ENCODE measurements at regions of chr19 and their contacts with region 1.

Region 1: GRCh38 chr19:35140962-35141637 is 2.0 kb upstream of the FXYD7 start:
- DNase-seq: peak; percentile 88
- H3K4me3 ChIP-seq: peak overlapping the region in 1 of 3 experiments; percentile 26
- H3K27ac ChIP-seq: no peak overlapping the region
- H3K4me1 ChIP-seq: peaks cover 33% of the 10 kb centered on the region
- H3K27me3 ChIP-seq: no peaks in the 10 kb centered on the region
- CTCF ChIP-seq: peak; percentile 19 to 79

Region 2: DNA sequence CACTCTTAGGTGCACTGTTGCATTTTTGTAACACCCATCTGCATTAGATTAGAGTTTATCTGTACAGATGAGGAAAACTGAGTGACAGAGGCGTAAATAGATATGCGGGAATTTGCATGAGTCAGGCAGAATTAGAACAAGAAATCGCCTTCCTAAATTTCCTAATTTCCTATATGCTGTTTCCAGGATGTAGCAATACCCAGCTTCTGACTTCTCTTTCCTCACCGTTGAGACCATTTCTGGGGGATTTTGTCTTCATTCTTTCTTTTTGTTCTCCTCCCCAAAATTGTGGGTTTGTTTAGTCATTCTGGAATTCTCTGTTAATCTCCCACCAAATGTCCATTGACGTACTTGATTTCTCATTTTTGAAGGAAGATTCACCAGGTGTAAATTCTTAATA is 166.5 kb before region 1 on chr19:
- CTCF ChIA-PET with region 1: no interaction called
- dilution Hi-C with region 1: loop called (anchors 5 kb)
- in situ Hi-C with region 1: no loop called
- intact Hi-C with region 1: loop called (anchors 1 kb)
- DNase-seq: no peak
- H3K4me3 ChIP-seq: no peak overlapping the region
- H3K27ac ChIP-seq: no peak overlapping the region
- H3K4me1 ChIP-seq: no peaks in the 10 kb centered on the region
- H3K27me3 ChIP-seq: no peaks in the 10 kb centered on the region
- CTCF ChIP-seq: no peak

Region 3: GRCh38 chr19:35114353-35115176 is 26.5 kb before region 1 on chr19:
- CTCF ChIA-PET with region 1: no interaction called
- dilution Hi-C with region 1: no loop called
- in situ Hi-C with region 1: no loop called
- intact Hi-C with region 1: loop called (anchors 1 kb)
- DNase-seq: peak; percentile 68
- H3K4me3 ChIP-seq: peak overlapping the region; percentile 75 to 94 (median 89)
- H3K27ac ChIP-seq: peak overlapping the region; percentile 91
- H3K4me1 ChIP-seq: peaks cover 50% of the 10 kb centered on the region
- H3K27me3 ChIP-seq: no peaks in the 10 kb centered on the region
- CTCF ChIP-seq: peak; percentile 99 to 100

Region 4: GRCh38 chr19:35213663-35214632 is 72.8 kb after region 1 on chr19:
- CTCF ChIA-PET with region 1: no interaction called
- dilution Hi-C with region 1: no loop called
- in situ Hi-C with region 1: no loop called
- intact Hi-C with region 1: loop called (anchors 2 kb)
- DNase-seq: peak; percentile 94
- H3K4me3 ChIP-seq: no peak overlapping the region
- H3K27ac ChIP-seq: no peak overlapping the region
- H3K4me1 ChIP-seq: peaks cover 11% of the 10 kb centered on the region
- H3K27me3 ChIP-seq: no peaks in the 10 kb centered on the region
- CTCF ChIP-seq: no peak

Region 5: GRCh38 chr19:35269421-35270117 is 128.5 kb after region 1 on chr19:
- CTCF ChIA-PET with region 1: no interaction called
- dilution Hi-C with region 1: no loop called
- in situ Hi-C with region 1: no loop called
- intact Hi-C with region 1: loop called (anchors 5 kb)
- DNase-seq: peak; percentile 70
- H3K4me3 ChIP-seq: peak overlapping the region; percentile 15 to 72 (median 62)
- H3K27ac ChIP-seq: no peak overlapping the region
- H3K4me1 ChIP-seq: peaks cover 37% of the 10 kb centered on the region
- H3K27me3 ChIP-seq: no peaks in the 10 kb centered on the region
- CTCF ChIP-seq: peak; percentile 26 to 61